Caco-2 (cell line): ENCODE measurements at regions of chr12 and their contacts with region 1.

Region 1: DNA sequence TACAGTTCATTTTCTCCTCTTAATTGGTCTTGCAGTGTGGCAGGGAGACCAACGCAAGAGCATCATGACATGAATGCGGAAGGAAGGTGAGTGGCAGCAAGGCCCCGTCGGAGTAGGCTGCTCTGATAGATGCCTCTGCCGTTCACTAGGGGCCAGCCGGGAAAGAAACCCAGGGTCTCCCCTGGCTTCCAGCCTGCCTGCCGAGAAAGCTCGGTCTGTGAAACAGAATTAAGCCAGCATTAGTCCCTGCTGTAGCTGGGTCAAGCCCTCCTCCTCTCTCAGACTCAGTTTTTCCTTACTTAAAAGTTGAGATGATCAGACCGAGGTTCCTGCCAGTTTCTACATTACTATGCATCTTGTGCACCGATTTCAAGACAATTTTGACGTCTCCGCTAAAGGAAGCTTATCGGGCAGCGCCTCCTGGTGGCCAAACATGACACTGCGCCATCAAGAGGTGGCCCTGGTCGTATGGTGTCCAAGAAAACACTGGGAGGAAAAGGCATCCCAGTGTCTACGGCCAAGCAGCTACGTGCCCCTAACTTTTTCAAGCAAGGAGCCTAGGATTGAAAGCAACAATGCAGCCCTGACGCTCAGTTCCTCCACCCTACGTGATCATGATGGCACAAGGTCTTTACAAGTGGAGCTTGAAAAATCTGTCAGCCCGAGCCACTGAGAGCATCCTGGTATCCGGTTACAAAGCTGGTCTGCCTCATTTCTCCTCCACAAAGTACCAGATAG is 131.6 kb downstream of the KSR2 start:
- DNase-seq: peak; percentile 61 to 78
- H3K4me3 ChIP-seq: no peak overlapping the region
- H3K4me3 Mint-ChIP-seq: no peak overlapping the region
- H3K27ac Mint-ChIP-seq: no peak overlapping the region
- H3K4me1 ChIP-seq: no peaks in the 10 kb centered on the region
- H3K4me1 Mint-ChIP-seq: no peaks in the 10 kb centered on the region
- H3K27me3 ChIP-seq: no peaks in the 10 kb centered on the region
- H3K27me3 Mint-ChIP-seq: peaks cover 5% of the 10 kb centered on the region
- CTCF ChIP-seq: peak; percentile 95 to 96

Region 2: GRCh38 chr12:117212563-117213190 is 624.5 kb before region 1 on chr12:
- CTCF ChIA-PET with region 1: no interaction called
- POLR2A ChIA-PET with region 1: no interaction called
- intact Hi-C with region 1: loop called (anchors 5 kb)
- DNase-seq: peak; percentile 57 to 73
- H3K4me3 ChIP-seq: no peak overlapping the region
- H3K4me3 Mint-ChIP-seq: no peak overlapping the region
- H3K27ac Mint-ChIP-seq: no peak overlapping the region
- H3K4me1 ChIP-seq: no peaks in the 10 kb centered on the region
- H3K4me1 Mint-ChIP-seq: no peaks in the 10 kb centered on the region
- H3K27me3 ChIP-seq: no peaks in the 10 kb centered on the region
- H3K27me3 Mint-ChIP-seq: peaks cover 30% of the 10 kb centered on the region
- CTCF ChIP-seq: peak; percentile 86 to 88

Region 3: GRCh38 chr12:117587631-117588287 is 249.4 kb before region 1 on chr12:
- CTCF ChIA-PET with region 1: no interaction called
- POLR2A ChIA-PET with region 1: no interaction called
- intact Hi-C with region 1: loop called (anchors 1 kb)
- DNase-seq: peak; percentile 55 to 70
- H3K4me3 ChIP-seq: no peak overlapping the region
- H3K4me3 Mint-ChIP-seq: peak overlapping the region; percentile 30
- H3K27ac Mint-ChIP-seq: no peak overlapping the region
- H3K4me1 ChIP-seq: no peaks in the 10 kb centered on the region
- H3K4me1 Mint-ChIP-seq: peaks cover 6% of the 10 kb centered on the region
- H3K27me3 ChIP-seq: no peaks in the 10 kb centered on the region
- H3K27me3 Mint-ChIP-seq: peaks cover 9% of the 10 kb centered on the region
- CTCF ChIP-seq: peak; percentile 84 to 85

Region 4: GRCh38 chr12:117671734-117672133 is 165.4 kb before region 1 on chr12:
- CTCF ChIA-PET with region 1: interaction called, 3 read pairs
- POLR2A ChIA-PET with region 1: no interaction called
- intact Hi-C with region 1: loop called (anchors 2 kb)
- DNase-seq: peak; percentile 47 to 53
- H3K4me3 ChIP-seq: no peak overlapping the region
- H3K4me3 Mint-ChIP-seq: no peak overlapping the region
- H3K27ac Mint-ChIP-seq: no peak overlapping the region
- H3K4me1 ChIP-seq: no peaks in the 10 kb centered on the region
- H3K4me1 Mint-ChIP-seq: no peaks in the 10 kb centered on the region
- H3K27me3 ChIP-seq: no peaks in the 10 kb centered on the region
- H3K27me3 Mint-ChIP-seq: peaks cover 21% of the 10 kb centered on the region
- CTCF ChIP-seq: peak; percentile 32 to 66

Region 5: DNA sequence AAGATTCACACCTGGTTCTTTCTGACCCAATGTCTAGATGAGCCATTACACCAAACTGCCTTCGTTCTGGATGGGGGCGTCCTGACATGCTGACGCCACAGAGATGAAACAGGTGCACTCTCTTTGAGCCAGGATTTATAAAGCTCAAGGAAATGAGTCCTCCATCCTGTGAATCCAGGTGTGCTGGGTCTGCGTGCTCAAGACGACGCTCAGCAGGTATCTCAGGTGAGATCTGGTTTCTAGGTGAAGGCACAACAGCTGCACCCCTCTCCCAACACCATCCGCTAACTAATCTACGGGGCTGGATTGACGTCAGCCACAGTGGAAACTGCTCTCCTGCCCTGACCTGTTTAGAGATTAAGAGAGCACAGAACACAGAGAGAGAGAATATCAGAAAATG is 70.0 kb after region 1 on chr12:
- CTCF ChIA-PET with region 1: no interaction called
- POLR2A ChIA-PET with region 1: no interaction called
- intact Hi-C with region 1: no loop called
- DNase-seq: peak in 1 of 2 experiments; percentile 8
- H3K4me3 ChIP-seq: no peak overlapping the region
- H3K4me3 Mint-ChIP-seq: no peak overlapping the region
- H3K27ac Mint-ChIP-seq: no peak overlapping the region
- H3K4me1 ChIP-seq: no peaks in the 10 kb centered on the region
- H3K4me1 Mint-ChIP-seq: no peaks in the 10 kb centered on the region
- H3K27me3 ChIP-seq: no peaks in the 10 kb centered on the region
- H3K27me3 Mint-ChIP-seq: no peaks in the 10 kb centered on the region
- CTCF ChIP-seq: no peak